ENCODE measurements at regions of chr3 and their contacts with region 1.

Region 1: GRCh38 chr3:177144923-177145780 is 52.1 kb downstream of the TBL1XR1 start:
- DNase-seq: peak; percentile 62
- ATAC-seq: peak; percentile 77
- H3K4me3 ChIP-seq: peak overlapping the region; percentile 41; the same call in 1 of the 2 replicates
- H3K27ac ChIP-seq: peak overlapping the region; percentile 89
- H3K4me1 ChIP-seq: peaks cover 30% of the 10 kb centered on the region
- H3K27me3 ChIP-seq: no peaks in the 10 kb centered on the region
- CTCF ChIP-seq: no peak
- EP300 ChIP-seq: peak in 1 of 2 experiments; percentile 81; a peak in 2 of 4 replicates
- POLR2A ChIP-seq: no peak
- RAD21 ChIP-seq: no peak

Region 2: GRCh38 chr3:177124882-177125281 is 20.3 kb before region 1 on chr3:
- CTCF ChIA-PET with region 1: interaction called, 3 read pairs
- POLR2A ChIA-PET with region 1: no interaction called
- RAD21 ChIA-PET with region 1: no interaction called
- SMC1A ChIA-PET with region 1: interaction called, 11 read pairs
- in situ Hi-C with region 1: no loop called
- intact Hi-C with region 1: no loop called
- DNase-seq: no peak
- ATAC-seq: no peak
- H3K4me3 ChIP-seq: no peak overlapping the region
- H3K27ac ChIP-seq: no peak overlapping the region
- H3K4me1 ChIP-seq: no peaks in the 10 kb centered on the region
- H3K27me3 ChIP-seq: no peaks in the 10 kb centered on the region
- CTCF ChIP-seq: no peak
- EP300 ChIP-seq: no peak
- POLR2A ChIP-seq: no peak
- RAD21 ChIP-seq: no peak

Region 3: DNA sequence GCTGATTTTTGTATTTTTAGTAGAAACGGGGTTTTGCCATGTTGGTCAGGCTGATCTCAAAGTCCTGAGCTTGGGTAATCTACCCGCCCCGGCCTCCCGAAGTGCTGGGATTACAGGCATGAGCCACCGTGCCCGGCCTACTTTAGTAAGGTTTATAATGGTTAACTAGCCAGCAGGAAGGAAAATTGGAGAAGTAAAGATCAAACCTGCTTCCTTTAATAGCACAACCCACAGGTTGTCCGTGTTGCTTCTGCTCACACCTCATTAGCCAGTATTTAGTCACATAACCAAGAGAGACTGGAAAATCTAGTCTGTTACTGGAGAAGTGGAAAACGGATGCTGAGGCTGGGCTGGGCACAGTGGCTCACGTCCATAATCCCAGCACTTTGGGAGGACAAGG is 104.1 kb after region 1 on chr3:
- CTCF ChIA-PET with region 1: no interaction called
- POLR2A ChIA-PET with region 1: no interaction called
- RAD21 ChIA-PET with region 1: no interaction called
- SMC1A ChIA-PET with region 1: no interaction called
- in situ Hi-C with region 1: no loop called
- intact Hi-C with region 1: loop called (anchors 5 kb)
- DNase-seq: no peak
- ATAC-seq: no peak
- H3K4me3 ChIP-seq: no peak overlapping the region
- H3K27ac ChIP-seq: no peak overlapping the region
- H3K4me1 ChIP-seq: peaks cover 17% of the 10 kb centered on the region
- H3K27me3 ChIP-seq: no peaks in the 10 kb centered on the region
- CTCF ChIP-seq: no peak
- EP300 ChIP-seq: no peak
- POLR2A ChIP-seq: no peak
- RAD21 ChIP-seq: no peak

Region 4: GRCh38 chr3:177887475-177887874 is 742.3 kb after region 1 on chr3:
- CTCF ChIA-PET with region 1: no interaction called
- POLR2A ChIA-PET with region 1: no interaction called
- RAD21 ChIA-PET with region 1: no interaction called
- SMC1A ChIA-PET with region 1: no interaction called
- in situ Hi-C with region 1: no loop called
- intact Hi-C with region 1: no loop called
- DNase-seq: no peak
- ATAC-seq: no peak; the same call in 2 of the 3 replicates
- H3K4me3 ChIP-seq: no peak overlapping the region
- H3K27ac ChIP-seq: no peak overlapping the region
- H3K4me1 ChIP-seq: no peaks in the 10 kb centered on the region
- H3K27me3 ChIP-seq: no peaks in the 10 kb centered on the region
- CTCF ChIP-seq: no peak
- EP300 ChIP-seq: no peak
- POLR2A ChIP-seq: no peak
- RAD21 ChIP-seq: no peak

Measured in GM12878 (cell line).